ENCODE measurements at regions of chr20 and their contacts with region 1.

Region 1: GRCh38 chr20:49928401-49929141 is 7.6 kb upstream of the RNF114 start:
- DNase-seq: peak; percentile 72 to 92
- ATAC-seq: peak; percentile 90 to 98 (median 91)
- H3K4me3 ChIP-seq: no peak overlapping the region
- H3K4me3 Mint-ChIP-seq: no peak overlapping the region
- H3K27ac ChIP-seq: no peak overlapping the region
- H3K27ac Mint-ChIP-seq: no peak overlapping the region
- H3K4me1 ChIP-seq: no peaks in the 10 kb centered on the region
- H3K4me1 Mint-ChIP-seq: no peaks in the 10 kb centered on the region
- H3K27me3 ChIP-seq: no peaks in the 10 kb centered on the region
- H3K27me3 Mint-ChIP-seq: no peaks in the 10 kb centered on the region
- CTCF ChIP-seq: peak; percentile 96

Region 2: DNA sequence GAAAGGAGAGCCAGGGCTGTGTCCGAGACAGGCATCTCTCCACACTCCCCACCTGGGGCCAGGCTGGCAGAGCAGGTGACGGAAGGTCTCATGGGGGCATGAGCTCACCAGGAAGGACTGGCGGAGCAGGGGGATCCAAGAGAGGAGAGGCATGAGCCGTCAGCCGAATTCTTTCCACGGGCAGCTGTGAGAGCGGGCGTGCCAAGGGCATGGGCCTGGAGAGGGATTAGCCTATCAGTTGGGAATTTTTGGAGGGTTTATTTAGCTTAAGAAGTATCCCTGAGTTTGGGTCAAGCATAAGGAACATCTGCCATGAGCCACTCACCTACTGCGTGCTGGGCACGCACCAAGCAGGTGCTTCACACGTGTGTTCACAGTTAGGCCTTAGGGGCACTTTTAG is 590.5 kb before region 1 on chr20:
- intact Hi-C with region 1: loop called (anchors 10 kb)
- DNase-seq: no peak
- ATAC-seq: no peak
- H3K4me3 ChIP-seq: no peak overlapping the region
- H3K4me3 Mint-ChIP-seq: no peak overlapping the region
- H3K27ac ChIP-seq: no peak overlapping the region
- H3K27ac Mint-ChIP-seq: no peak overlapping the region
- H3K4me1 ChIP-seq: no peaks in the 10 kb centered on the region
- H3K4me1 Mint-ChIP-seq: peaks cover 0 to 5% of the 10 kb centered on the region in 2 donors
- H3K27me3 ChIP-seq: no peaks in the 10 kb centered on the region
- H3K27me3 Mint-ChIP-seq: peaks cover 12 to 15% of the 10 kb centered on the region in 2 donors
- CTCF ChIP-seq: no peak

Region 3: GRCh38 chr20:49541733-49542513 is 386.6 kb before region 1 on chr20:
- intact Hi-C with region 1: loop called (anchors 1 kb)
- DNase-seq: peak; percentile 47 to 81
- ATAC-seq: peak; percentile 55 to 79 (median 73)
- H3K4me3 ChIP-seq: no peak overlapping the region
- H3K4me3 Mint-ChIP-seq: no peak overlapping the region
- H3K27ac ChIP-seq: no peak overlapping the region
- H3K27ac Mint-ChIP-seq: no peak overlapping the region
- H3K4me1 ChIP-seq: peaks cover 3% of the 10 kb centered on the region
- H3K4me1 Mint-ChIP-seq: peaks cover 0 to 10% of the 10 kb centered on the region in 2 donors
- H3K27me3 ChIP-seq: no peaks in the 10 kb centered on the region
- H3K27me3 Mint-ChIP-seq: peaks cover 0 to 10% of the 10 kb centered on the region in 2 donors
- CTCF ChIP-seq: peak; percentile 82

Region 4: DNA sequence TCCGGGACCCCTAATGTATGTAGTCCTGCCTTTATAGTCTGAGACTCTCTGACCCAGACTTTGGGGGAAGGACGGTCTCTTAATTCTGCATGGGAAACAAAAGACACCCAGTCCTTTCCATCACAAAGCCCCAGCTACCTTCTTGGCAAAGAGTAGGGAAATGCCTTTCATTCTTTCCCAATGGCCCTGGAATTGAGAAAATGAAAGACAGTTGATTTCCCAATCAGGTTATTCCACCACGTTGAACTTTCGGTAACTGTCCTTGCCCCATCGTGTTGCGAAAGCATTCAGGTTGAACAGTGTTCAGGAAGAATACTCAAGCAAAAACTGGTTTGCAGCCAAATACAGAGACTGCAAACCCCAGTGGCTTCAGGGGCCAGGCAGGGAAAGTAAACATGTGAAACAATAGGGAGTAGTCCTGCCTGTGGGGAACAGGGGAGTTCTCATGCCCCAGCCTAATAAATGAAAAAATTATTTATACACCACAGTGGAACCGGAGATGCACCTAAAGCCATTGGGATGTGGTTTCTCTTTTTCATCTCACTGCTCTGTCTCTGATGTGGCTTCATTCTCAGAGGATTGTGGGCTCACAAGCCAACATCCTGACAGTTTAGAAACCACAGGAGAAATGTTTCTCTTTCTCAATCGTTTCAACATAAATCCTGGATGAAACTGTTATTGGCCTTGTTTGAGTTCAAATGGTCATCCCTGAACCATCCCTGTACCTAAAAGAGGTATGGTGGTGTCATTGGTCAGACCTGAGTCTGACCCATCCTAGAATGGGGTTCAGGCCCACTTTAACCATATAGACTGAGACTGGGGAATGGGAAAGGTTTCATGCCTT is 160.1 kb before region 1 on chr20:
- intact Hi-C with region 1: no loop called
- DNase-seq: peak in 1 of 2 donors; percentile 68
- ATAC-seq: peak; percentile 35 to 48 (median 40)
- H3K4me3 ChIP-seq: no peak overlapping the region
- H3K4me3 Mint-ChIP-seq: no peak overlapping the region
- H3K27ac ChIP-seq: no peak overlapping the region
- H3K27ac Mint-ChIP-seq: peak overlapping the region in 1 of 2 donors; percentile 42
- H3K4me1 ChIP-seq: peaks cover 14% of the 10 kb centered on the region
- H3K4me1 Mint-ChIP-seq: peaks cover 10 to 13% of the 10 kb centered on the region in 2 donors
- H3K27me3 ChIP-seq: no peaks in the 10 kb centered on the region
- H3K27me3 Mint-ChIP-seq: peaks cover 0 to 8% of the 10 kb centered on the region in 2 donors
- CTCF ChIP-seq: no peak

Region 5: GRCh38 chr20:50163570-50164317 is 235.2 kb after region 1 on chr20:
- intact Hi-C with region 1: no loop called
- DNase-seq: no peak
- ATAC-seq: no peak
- H3K4me3 ChIP-seq: no peak overlapping the region
- H3K4me3 Mint-ChIP-seq: no peak overlapping the region
- H3K27ac ChIP-seq: no peak overlapping the region
- H3K27ac Mint-ChIP-seq: no peak overlapping the region
- H3K4me1 ChIP-seq: peaks cover 9% of the 10 kb centered on the region
- H3K4me1 Mint-ChIP-seq: peaks cover 9 to 10% of the 10 kb centered on the region in 2 donors
- H3K27me3 ChIP-seq: no peaks in the 10 kb centered on the region
- H3K27me3 Mint-ChIP-seq: peaks cover 0 to 7% of the 10 kb centered on the region in 2 donors
- CTCF ChIP-seq: no peak

Measured in natural killer cell (primary cell).